Breast epithelium (tissue), 4 donors: ENCODE measurements at regions of chr5 and their contacts with region 1.

Region 1: DNA sequence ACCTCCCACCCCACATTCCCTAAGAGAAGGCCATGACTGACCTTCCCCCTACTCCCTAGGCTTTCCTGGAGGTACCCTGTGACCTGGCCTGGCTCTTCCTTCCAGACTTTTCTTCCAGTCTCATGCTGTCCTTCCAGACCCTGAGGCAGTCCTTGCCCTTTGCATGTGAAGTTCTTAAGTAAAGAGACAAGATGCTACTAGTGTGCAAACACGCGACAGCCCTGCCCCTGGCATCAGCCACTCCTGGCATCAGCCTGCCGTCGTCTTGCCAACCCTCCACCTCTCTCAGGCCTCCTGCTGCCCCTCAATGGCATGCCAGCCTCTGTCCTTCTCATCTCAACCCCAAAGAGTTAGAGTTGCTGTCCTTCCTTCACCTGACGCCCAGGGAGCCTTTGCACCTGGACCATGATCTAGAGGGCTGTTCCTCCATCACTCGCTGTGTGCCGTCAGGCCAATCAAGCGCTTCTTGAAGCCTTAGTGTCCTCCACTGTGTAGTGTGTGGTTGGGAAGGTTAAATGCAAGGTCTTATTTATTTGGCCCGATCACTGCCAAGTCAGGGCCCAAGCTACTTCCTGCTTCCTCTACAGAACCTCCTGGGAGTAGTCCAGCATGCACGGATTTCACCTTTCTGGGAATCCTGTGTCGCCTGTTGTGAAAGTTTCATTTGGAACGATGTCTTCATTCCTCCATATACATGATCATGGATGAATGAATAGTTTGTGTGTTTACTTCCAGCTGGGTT is 61.9 kb downstream of the WWC1 start:
- DNase-seq: peak; percentile 86 to 90
- H3K4me3 ChIP-seq: no peak overlapping the region
- H3K27ac ChIP-seq: peak overlapping the region; percentile 84 to 85
- H3K4me1 ChIP-seq: peaks cover 0 to 5% of the 10 kb centered on the region in 2 donors
- H3K27me3 ChIP-seq: no peaks in the 10 kb centered on the region
- CTCF ChIP-seq: peak in 1 of 3 donors; percentile 19
- POLR2A ChIP-seq: no peak

Region 2: GRCh38 chr5:168291464-168291961 is 61.9 kb before region 1 on chr5 and contains the start of gene WWC1:
- intact Hi-C with region 1: loop called (anchors 10 kb)
- DNase-seq: peak; percentile 84 to 89
- H3K4me3 ChIP-seq: peak within 1 kb of the TSS; percentile 36 to 81 (median 75)
- H3K27ac ChIP-seq: peak within 1 kb of the TSS; percentile 86 to 90
- H3K4me1 ChIP-seq: peaks cover 0 to 10% of the 10 kb centered on the region in 2 donors
- H3K27me3 ChIP-seq: no peaks in the 10 kb centered on the region
- CTCF ChIP-seq: peak; percentile 28 to 52 (median 35)
- POLR2A ChIP-seq: no peak
- total RNA-seq, gene WWC1: 0.96 to 59.9 (median 59.6) TPM